Heart right ventricle (tissue), 16 donors: ENCODE measurements at regions of chr6 and their contacts with region 1.

Region 1: DNA sequence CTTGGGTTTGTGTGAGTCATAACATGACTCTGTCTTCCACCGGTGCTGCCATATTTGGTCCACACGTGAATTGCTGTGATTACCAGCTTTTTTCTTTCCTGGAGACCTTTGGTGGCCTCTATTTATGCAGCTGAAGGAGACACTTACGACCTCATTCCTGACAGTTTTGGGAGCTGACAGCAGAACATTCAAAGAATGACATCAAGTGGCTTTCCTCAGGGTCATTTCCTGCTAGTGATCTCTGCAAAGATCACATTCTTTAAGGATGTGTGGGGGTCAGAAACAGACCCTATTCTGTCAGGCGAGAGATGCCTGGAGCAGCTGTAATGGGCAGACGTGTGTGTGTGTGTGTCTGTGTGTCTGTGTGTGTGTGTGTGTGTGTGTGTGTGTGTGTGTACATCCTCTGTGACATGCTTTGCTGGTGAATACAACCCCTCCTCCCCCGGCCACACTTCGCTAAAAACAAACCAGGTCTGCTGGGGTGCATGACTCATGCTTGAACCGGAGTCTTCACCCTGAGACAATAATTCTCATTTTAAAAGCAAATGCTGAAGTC is 115.6 kb downstream of the TMEM170B start:
- DNase-seq: peak in 1 of 2 donors; percentile 31
- ATAC-seq: peak in 7 of 8 donors; percentile 27 to 68 (median 46)
- H3K4me3 ChIP-seq: no peak overlapping the region
- H3K27ac ChIP-seq: peak overlapping the region in 1 of 10 donors; percentile 61
- H3K4me1 ChIP-seq: peaks cover 0 to 67% (median 40%) of the 10 kb centered on the region in 9 donors
- H3K27me3 ChIP-seq: no peaks in the 10 kb centered on the region
- CTCF ChIP-seq: no peak

Region 2: GRCh38 chr6:11023032-11023431 is 630.1 kb before region 1 on chr6:
- intact Hi-C with region 1: no loop called
- DNase-seq: no peak
- ATAC-seq: peak in 7 of 8 donors; percentile 22 to 66 (median 55)
- H3K4me3 ChIP-seq: no peak overlapping the region
- H3K27ac ChIP-seq: peak overlapping the region in 4 of 10 donors; percentile 32 to 60 (median 48)
- H3K4me1 ChIP-seq: peaks cover 0 to 65% (median 30%) of the 10 kb centered on the region in 9 donors
- H3K27me3 ChIP-seq: peaks cover 0 to 11% (median 3%) of the 10 kb centered on the region in 7 donors
- CTCF ChIP-seq: no peak

Region 3: GRCh38 chr6:11585426-11586016 is 67.6 kb before region 1 on chr6:
- intact Hi-C with region 1: loop called in 5 of 10 experiments (anchors 2 to 10 kb)
- DNase-seq: no peak
- ATAC-seq: peak in 1 of 8 donors; percentile 34
- H3K4me3 ChIP-seq: no peak overlapping the region
- H3K27ac ChIP-seq: no peak overlapping the region
- H3K4me1 ChIP-seq: peaks cover 0 to 13% (median 0%) of the 10 kb centered on the region in 9 donors
- H3K27me3 ChIP-seq: no peaks in the 10 kb centered on the region
- CTCF ChIP-seq: peak; percentile 20 to 83 (median 67)

Region 4: DNA sequence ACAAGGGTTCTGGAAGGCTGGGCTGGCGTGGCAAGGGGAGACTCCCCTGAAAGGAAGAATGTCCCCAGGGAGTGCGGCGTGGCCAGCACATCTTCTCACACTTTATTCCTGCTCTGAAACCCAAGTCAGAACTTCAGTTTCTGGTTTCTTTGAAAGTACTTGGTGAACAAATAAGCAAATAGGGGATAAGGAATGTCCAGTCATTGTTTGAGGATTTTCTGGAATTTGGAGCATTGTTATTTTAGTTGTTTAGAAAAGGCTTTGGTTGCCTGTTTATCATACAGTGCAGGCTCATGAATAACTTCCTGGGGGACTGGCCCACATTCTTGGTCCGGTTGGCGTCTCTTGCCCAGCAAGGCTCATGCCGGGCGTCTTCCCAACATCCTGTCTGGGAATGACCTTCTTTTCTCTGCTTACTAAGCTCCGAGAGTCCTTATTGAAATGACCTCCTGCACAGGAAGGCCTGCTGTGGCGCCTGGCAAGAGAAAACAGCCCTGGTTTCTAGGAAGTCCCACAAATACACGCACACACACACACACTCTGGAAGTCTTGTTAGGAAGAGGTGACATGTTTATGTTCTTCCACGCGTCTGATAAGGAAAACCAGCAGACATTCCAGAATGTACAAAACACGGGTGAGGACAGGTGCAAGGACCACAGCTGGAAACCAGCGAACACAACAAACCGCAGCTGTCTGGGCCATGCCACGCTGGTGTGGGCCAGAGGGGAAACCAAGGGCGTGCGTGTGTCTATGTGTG is 43.6 kb before region 1 on chr6:
- intact Hi-C with region 1: loop called in 4 of 10 experiments (anchors 2 to 5 kb)
- DNase-seq: peak; percentile 45 to 64
- ATAC-seq: peak; percentile 74 to 90 (median 78)
- H3K4me3 ChIP-seq: no peak overlapping the region
- H3K27ac ChIP-seq: peak overlapping the region in 9 of 10 donors; percentile 28 to 79 (median 67)
- H3K4me1 ChIP-seq: peaks cover 7 to 59% (median 44%) of the 10 kb centered on the region in 9 donors
- H3K27me3 ChIP-seq: no peaks in the 10 kb centered on the region
- CTCF ChIP-seq: no peak

Region 5: GRCh38 chr6:12011276-12012076 is 358.4 kb after region 1 on chr6:
- intact Hi-C with region 1: loop called in 4 of 10 experiments (anchors 2 to 5 kb)
- DNase-seq: peak; percentile 97 to 98
- ATAC-seq: peak; percentile 91 to 97 (median 94)
- H3K4me3 ChIP-seq: peak overlapping the region; percentile 53 to 92 (median 73)
- H3K27ac ChIP-seq: peak overlapping the region; percentile 81 to 98 (median 96)
- H3K4me1 ChIP-seq: peaks cover 4 to 39% (median 30%) of the 10 kb centered on the region in 9 donors
- H3K27me3 ChIP-seq: no peaks in the 10 kb centered on the region
- CTCF ChIP-seq: no peak

Region 6: GRCh38 chr6:12075067-12075563 is 422.0 kb after region 1 on chr6:
- intact Hi-C with region 1: loop called in 1 of 10 experiments (anchors 10 kb)
- DNase-seq: no peak
- ATAC-seq: no peak
- H3K4me3 ChIP-seq: no peak overlapping the region
- H3K27ac ChIP-seq: no peak overlapping the region
- H3K4me1 ChIP-seq: peaks cover 0 to 11% (median 4%) of the 10 kb centered on the region in 9 donors
- H3K27me3 ChIP-seq: no peaks in the 10 kb centered on the region
- CTCF ChIP-seq: peak in 7 of 9 donors; percentile 27 to 60 (median 46)

Region 7: GRCh38 chr6:12233693-12234571 is 580.8 kb after region 1 on chr6:
- intact Hi-C with region 1: loop called (anchors 1 to 10 kb)
- DNase-seq: peak in 1 of 2 donors; percentile 56
- ATAC-seq: peak in 6 of 8 donors; percentile 56 to 77 (median 61)
- H3K4me3 ChIP-seq: no peak overlapping the region
- H3K27ac ChIP-seq: peak overlapping the region in 1 of 10 donors; percentile 27
- H3K4me1 ChIP-seq: peaks cover 0 to 36% (median 0%) of the 10 kb centered on the region in 9 donors
- H3K27me3 ChIP-seq: no peaks in the 10 kb centered on the region
- CTCF ChIP-seq: peak; percentile 35 to 85 (median 70)

Region 8: DNA sequence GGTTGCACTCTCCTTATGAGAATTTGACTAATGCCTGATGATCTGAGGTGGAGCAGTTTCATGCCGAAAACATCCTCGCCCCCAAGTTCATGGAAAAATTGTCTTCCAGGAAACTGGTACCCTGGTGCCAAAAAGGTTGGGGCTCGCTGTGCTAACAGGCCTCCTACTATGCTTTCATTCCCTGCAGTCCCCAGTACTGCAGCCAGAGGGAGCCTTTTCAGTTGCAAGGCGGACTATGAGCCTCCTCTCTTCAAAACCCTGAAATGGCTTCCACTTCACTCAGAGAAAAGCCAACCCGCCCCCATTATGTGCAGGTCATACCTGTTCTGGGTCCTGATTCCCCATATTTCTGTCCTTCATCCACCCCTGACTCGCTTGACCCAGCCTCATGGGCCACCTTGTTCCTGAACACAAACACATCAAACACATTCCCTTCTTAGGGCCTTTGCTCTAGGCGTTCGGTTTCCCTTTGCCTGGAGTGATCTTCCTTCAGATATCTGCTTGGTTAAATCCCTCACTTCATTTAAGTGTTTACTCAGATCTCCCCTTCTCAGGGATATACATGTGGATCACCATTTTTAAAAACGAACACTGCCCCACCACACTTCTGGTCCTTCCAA is 1237.2 kb after region 1 on chr6:
- intact Hi-C with region 1: loop called in 1 of 10 experiments (anchors 5 kb)
- DNase-seq: no peak
- ATAC-seq: no peak
- H3K4me3 ChIP-seq: no peak overlapping the region
- H3K27ac ChIP-seq: no peak overlapping the region
- H3K4me1 ChIP-seq: peaks cover 0 to 20% (median 7%) of the 10 kb centered on the region in 9 donors
- H3K27me3 ChIP-seq: no peaks in the 10 kb centered on the region
- CTCF ChIP-seq: peak in 7 of 9 donors; percentile 12 to 50 (median 34)